ENCODE measurements at regions of chr12 and their contacts with region 1.

Region 1: DNA sequence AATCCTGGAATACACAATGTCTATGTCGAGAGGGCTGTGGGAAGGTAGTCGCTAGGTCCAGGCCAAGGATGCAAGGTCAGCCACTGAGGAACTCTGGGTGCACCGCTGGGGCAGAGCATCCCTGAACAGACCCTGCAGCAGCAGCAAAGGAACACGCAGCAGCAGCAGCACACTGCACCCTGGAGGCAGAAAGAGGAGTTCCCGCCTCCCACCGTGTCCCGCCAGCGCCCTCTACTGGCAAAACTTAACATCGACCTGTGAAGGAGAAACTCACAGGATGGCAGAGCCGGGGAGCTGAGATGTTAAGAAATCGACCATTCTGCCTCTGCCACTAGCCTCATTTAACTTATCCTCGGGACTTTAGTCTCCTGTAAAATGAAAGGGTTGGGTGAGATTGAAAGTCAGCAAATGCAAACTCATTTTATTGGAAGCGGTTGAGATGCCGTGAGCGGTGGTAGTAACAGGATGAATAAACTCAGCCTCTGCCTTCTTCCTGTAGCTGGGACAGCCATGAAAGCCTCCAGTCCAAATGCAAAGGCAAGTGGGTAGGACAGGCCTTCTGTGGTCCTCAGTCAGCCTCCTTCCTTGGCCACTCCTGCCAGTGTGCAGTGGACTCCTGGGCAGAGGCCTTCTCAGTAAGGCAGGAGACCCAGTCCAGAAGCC is 45.6 kb downstream of the STAB2 start:
- DNase-seq: peak; percentile 84
- H3K4me3 ChIP-seq: no peak overlapping the region
- H3K27ac ChIP-seq: peak overlapping the region in 2 of 8 donors; percentile 27 to 31
- H3K4me1 ChIP-seq: no peaks in the 10 kb centered on the region
- H3K27me3 ChIP-seq: no peaks in the 10 kb centered on the region
- CTCF ChIP-seq: peak; percentile 42 to 90 (median 69)
- POLR2A ChIP-seq: no peak

Region 2: GRCh38 chr12:103578926-103579325 is 53.8 kb before region 1 on chr12:
- intact Hi-C with region 1: loop called (anchors 5 kb)
- DNase-seq: no peak
- H3K4me3 ChIP-seq: no peak overlapping the region
- H3K27ac ChIP-seq: peak overlapping the region in 5 of 8 donors; percentile 34 to 74 (median 58)
- H3K4me1 ChIP-seq: peaks cover 0 to 16% (median 3%) of the 10 kb centered on the region in 6 donors
- H3K27me3 ChIP-seq: peaks cover 0 to 52% (median 0%) of the 10 kb centered on the region in 7 donors
- CTCF ChIP-seq: no peak
- POLR2A ChIP-seq: no peak